ENCODE measurements at regions of chr6 and their contacts with region 1.

Region 1: GRCh38 chr6:26031595-26032339 is 55.5 kb upstream of the HFE start:
- DNase-seq: peak; percentile 95
- ATAC-seq: peak; percentile 66
- H3K4me3 Mint-ChIP-seq: peak overlapping the region; percentile 91
- H3K27ac Mint-ChIP-seq: peak overlapping the region; percentile 98
- H3K4me1 Mint-ChIP-seq: peaks cover 50% of the 10 kb centered on the region
- H3K27me3 Mint-ChIP-seq: peaks cover 3% of the 10 kb centered on the region
- CTCF ChIP-seq: no peak

Region 2: DNA sequence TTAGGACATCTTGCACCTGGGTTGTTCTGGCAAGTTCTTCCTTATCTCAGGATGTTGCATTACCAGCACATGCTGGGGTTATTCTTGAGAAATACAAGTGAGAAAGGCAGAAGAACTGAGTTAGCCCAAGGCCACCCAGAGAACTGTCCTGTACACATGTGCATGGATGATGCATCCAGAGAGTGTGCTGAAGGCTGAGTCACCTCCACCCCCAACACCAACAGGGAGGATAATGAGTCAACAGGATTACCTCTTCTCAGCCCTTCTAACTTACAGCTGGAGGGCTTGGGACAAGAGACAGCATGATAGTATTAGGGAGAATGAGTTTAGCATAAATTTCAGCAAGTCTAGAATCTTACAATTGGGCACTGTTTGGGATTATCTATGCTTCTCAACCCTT is 371.3 kb before region 1 on chr6:
- CTCF ChIA-PET with region 1: no interaction called
- POLR2A ChIA-PET with region 1: no interaction called
- intact Hi-C with region 1: no loop called
- DNase-seq: peak; percentile 53
- ATAC-seq: peak; percentile 84
- H3K4me3 Mint-ChIP-seq: no peak overlapping the region
- H3K27ac Mint-ChIP-seq: no peak overlapping the region
- H3K4me1 Mint-ChIP-seq: no peaks in the 10 kb centered on the region
- H3K27me3 Mint-ChIP-seq: peaks cover 29% of the 10 kb centered on the region
- CTCF ChIP-seq: no peak

Region 3: DNA sequence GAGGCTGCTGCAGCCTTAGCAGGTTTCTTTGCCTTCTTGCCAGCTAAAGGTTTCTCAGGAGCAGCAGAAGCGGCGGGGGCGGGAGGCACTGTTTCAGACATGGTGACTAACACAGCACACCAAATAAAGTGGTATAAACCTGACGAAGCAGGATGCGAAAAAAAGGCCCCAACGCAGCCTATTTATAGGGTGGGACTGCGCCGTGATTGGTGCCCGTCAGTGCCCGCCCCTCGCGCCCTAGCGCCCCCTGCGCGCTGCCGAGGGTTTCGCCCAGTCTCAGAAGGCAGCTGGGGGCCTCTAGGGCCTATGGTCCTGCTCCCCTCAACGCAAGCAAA is 14.2 kb before region 1 on chr6:
- CTCF ChIA-PET with region 1: interaction called, 25 read pairs
- POLR2A ChIA-PET with region 1: interaction called, 291 read pairs
- intact Hi-C with region 1: no loop called
- DNase-seq: peak; percentile 97
- ATAC-seq: peak; percentile 50
- H3K4me3 Mint-ChIP-seq: peak overlapping the region; percentile 73
- H3K27ac Mint-ChIP-seq: peak overlapping the region; percentile 90
- H3K4me1 Mint-ChIP-seq: peaks cover 33% of the 10 kb centered on the region
- H3K27me3 Mint-ChIP-seq: no peaks in the 10 kb centered on the region
- CTCF ChIP-seq: no peak

Region 4: DNA sequence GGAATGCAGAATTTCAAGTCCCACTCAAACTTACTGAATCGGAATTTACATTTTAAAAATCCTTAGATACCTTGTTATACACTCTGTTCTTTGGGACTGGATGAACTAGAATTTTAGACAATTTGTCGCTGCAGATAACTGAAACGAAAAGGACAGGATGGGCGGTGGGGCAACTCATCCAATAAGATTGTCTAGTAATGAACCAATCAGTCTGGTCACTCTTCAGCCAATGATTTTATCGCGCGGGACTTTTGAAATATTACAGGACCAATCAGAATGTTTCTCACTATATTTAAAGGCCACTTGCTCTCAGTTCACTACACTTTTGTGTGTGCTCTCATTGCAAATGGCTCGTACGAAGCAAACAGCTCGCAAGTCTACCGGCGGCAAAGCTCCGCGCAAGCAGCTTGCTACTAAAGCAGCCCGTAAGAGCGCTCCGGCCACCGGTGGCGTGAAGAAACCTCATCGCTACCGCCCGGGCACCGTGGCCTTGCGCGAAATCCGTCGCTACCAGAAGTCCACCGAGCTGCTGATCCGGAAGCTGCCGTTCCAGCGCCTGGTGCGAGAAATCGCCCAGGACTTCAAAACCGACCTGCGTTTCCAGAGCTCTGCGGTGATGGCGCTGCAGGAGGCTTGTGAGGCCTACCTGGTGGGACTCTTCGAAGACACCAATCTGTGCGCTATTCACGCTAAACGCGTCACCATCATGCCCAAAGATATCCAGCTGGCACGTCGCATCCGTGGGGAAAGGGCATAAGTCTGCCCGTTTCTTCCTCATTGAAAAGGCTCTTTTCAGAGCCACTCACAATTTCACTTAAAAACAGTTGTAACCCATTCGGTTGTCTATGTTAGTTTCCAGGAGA is 13.5 kb after region 1 on chr6:
- CTCF ChIA-PET with region 1: interaction called, 48 read pairs
- POLR2A ChIA-PET with region 1: interaction called, 1,376 read pairs
- intact Hi-C with region 1: loop called (anchors 2 kb)
- DNase-seq: peak; percentile 85
- ATAC-seq: peak; percentile 63
- H3K4me3 Mint-ChIP-seq: peak overlapping the region; percentile 76
- H3K27ac Mint-ChIP-seq: peak overlapping the region; percentile 96
- H3K4me1 Mint-ChIP-seq: peaks cover 10% of the 10 kb centered on the region
- H3K27me3 Mint-ChIP-seq: no peaks in the 10 kb centered on the region
- CTCF ChIP-seq: no peak

Region 5: GRCh38 chr6:26054857-26055669 is 23.3 kb after region 1 on chr6:
- CTCF ChIA-PET with region 1: interaction called, 5 read pairs
- POLR2A ChIA-PET with region 1: interaction called, 1,376 read pairs
- intact Hi-C with region 1: no loop called
- DNase-seq: peak; percentile 94
- ATAC-seq: peak; percentile 73
- H3K4me3 Mint-ChIP-seq: peak overlapping the region; percentile 92
- H3K27ac Mint-ChIP-seq: peak overlapping the region; percentile 99
- H3K4me1 Mint-ChIP-seq: peaks cover 17% of the 10 kb centered on the region
- H3K27me3 Mint-ChIP-seq: peaks cover 3% of the 10 kb centered on the region
- CTCF ChIP-seq: no peak

Region 6: DNA sequence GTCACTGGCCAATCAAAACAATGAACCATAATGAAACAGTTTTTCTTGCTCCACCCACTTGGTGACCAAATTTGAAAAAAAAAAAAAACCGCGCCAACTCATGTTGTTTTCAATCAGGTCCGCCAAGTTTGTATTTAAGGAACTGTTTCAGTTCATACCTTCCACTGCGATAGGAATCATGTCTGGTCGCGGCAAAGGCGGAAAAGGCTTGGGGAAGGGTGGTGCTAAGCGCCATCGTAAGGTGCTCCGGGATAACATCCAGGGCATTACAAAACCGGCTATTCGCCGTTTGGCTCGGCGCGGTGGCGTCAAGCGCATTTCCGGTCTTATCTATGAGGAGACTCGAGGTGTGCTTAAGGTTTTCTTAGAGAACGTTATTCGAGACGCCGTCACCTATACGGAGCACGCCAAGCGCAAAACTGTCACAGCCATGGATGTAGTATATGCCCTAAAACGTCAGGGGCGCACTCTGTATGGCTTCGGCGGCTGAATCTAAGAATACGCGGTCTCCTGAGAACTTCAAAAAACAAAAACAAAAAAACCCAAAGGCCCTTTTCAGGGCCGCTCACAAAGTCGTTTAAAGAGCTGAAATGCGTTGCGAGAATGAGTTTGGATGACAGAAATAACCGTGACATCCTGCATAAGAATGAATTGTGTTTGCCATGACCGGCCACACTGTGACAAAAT is 72.1 kb after region 1 on chr6:
- CTCF ChIA-PET with region 1: no interaction called
- POLR2A ChIA-PET with region 1: interaction called, 26 read pairs
- intact Hi-C with region 1: no loop called
- DNase-seq: peak; percentile 90
- ATAC-seq: peak; percentile 87
- H3K4me3 Mint-ChIP-seq: peak overlapping the region; percentile 85
- H3K27ac Mint-ChIP-seq: peak overlapping the region; percentile 98
- H3K4me1 Mint-ChIP-seq: peaks cover 15% of the 10 kb centered on the region
- H3K27me3 Mint-ChIP-seq: peaks cover 2% of the 10 kb centered on the region
- CTCF ChIP-seq: peak; percentile 46

Region 7: DNA sequence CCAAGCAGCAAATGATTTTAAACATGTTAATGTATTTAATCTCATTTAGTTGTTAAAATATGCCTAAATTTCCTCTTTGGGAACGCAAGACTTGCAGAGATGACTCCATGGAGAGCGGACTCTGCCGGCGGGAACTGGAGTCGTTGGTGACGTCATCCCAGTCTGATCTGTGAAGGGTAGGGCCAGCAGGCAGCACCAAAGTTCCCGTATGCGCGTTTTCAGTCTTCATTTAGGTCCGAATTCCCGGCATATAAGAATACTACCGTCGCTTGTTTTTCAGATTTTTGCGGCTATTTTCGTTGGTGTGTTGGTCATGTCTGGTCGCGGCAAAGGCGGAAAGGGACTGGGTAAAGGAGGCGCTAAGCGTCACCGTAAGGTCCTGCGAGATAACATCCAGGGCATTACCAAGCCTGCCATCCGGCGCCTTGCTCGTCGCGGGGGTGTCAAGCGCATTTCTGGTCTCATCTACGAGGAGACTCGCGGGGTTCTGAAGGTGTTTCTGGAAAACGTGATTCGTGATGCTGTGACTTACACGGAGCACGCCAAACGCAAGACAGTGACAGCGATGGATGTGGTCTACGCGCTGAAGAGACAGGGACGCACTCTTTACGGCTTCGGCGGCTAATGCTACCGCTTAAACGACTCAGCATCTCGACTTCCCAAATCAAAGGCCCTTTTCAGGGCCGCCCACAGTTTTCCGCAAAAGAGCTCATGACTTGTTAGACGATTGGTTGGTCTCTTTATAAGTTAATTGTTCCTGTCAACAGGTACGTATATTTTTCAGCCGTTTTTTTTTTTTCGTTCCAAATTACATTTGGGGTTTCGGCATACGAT is 172.8 kb after region 1 on chr6:
- CTCF ChIA-PET with region 1: no interaction called
- POLR2A ChIA-PET with region 1: interaction called, 99 read pairs
- intact Hi-C with region 1: loop called (anchors 5 kb)
- DNase-seq: peak; percentile 91
- ATAC-seq: peak; percentile 75
- H3K4me3 Mint-ChIP-seq: no peak overlapping the region
- H3K27ac Mint-ChIP-seq: no peak overlapping the region
- H3K4me1 Mint-ChIP-seq: peaks cover 17% of the 10 kb centered on the region
- H3K27me3 Mint-ChIP-seq: no peaks in the 10 kb centered on the region
- CTCF ChIP-seq: no peak

Region 8: GRCh38 chr6:27871924-27872638 is 1840.3 kb after region 1 on chr6:
- CTCF ChIA-PET with region 1: no interaction called
- POLR2A ChIA-PET with region 1: interaction called, 22 read pairs
- intact Hi-C with region 1: no loop called
- DNase-seq: peak; percentile 85
- ATAC-seq: peak; percentile 61
- H3K4me3 Mint-ChIP-seq: peak overlapping the region; percentile 93
- H3K27ac Mint-ChIP-seq: peak overlapping the region; percentile 99
- H3K4me1 Mint-ChIP-seq: peaks cover 26% of the 10 kb centered on the region
- H3K27me3 Mint-ChIP-seq: no peaks in the 10 kb centered on the region
- CTCF ChIP-seq: peak; percentile 27

Measured in activated CD8-positive, alpha-beta T cell treated with anti-CD3 and anti-CD28 coated beads for 36 hours (primary cell).